ENCODE measurements at regions of chr5 and their contacts with region 1.

Region 1: DNA sequence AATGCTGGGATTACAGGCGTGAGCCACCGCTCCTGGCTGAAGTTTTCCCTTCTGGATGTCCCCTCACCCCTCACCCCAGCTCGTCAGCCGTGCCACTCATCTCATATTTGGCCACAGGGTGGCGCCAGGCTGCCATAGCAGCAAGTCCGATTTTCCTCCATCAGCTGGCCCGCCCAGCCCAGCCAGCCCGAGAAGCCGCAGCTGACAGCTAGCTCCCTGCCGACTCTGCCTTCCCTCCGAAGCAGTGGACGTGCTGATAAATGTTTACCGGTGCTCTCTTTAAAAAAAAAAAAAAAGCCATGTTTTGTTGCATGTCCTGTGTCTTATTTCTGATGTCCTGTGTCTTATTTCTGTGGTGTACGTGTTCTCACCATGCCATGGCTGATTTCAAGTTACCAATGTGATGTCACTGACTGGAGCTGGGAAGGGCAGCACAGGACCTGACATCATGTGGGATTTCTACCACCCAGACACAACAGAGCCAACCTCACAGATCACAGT is 58.3 kb downstream of the PFDN1 start:
- DNase-seq: peak; percentile 91 to 96 (median 94)
- ATAC-seq: peak; percentile 29 to 53 (median 48)
- H3K4me3 ChIP-seq: no peak overlapping the region
- H3K27ac ChIP-seq: peak overlapping the region in 10 of 12 donors; percentile 9 to 91 (median 74)
- H3K4me1 ChIP-seq: peaks cover 19 to 97% (median 76%) of the 10 kb centered on the region in 12 donors
- H3K27me3 ChIP-seq: no peaks in the 10 kb centered on the region
- CTCF ChIP-seq: peak; percentile 82 to 95 (median 89)
- POLR2A ChIP-seq: peak in 1 of 2 donors; percentile 21

Region 2: GRCh38 chr5:140182803-140183367 is 61.7 kb before region 1 on chr5:
- intact Hi-C with region 1: loop called in 5 of 10 experiments (anchors 5 to 10 kb)
- DNase-seq: peak in 4 of 5 donors; percentile 39 to 62 (median 42)
- ATAC-seq: peak; percentile 54 to 76 (median 68)
- H3K4me3 ChIP-seq: no peak overlapping the region
- H3K27ac ChIP-seq: peak overlapping the region in 11 of 12 donors; percentile 14 to 80 (median 67)
- H3K4me1 ChIP-seq: peaks cover 0 to 67% (median 51%) of the 10 kb centered on the region in 12 donors
- H3K27me3 ChIP-seq: no peaks in the 10 kb centered on the region
- CTCF ChIP-seq: no peak
- POLR2A ChIP-seq: no peak

Region 3: DNA sequence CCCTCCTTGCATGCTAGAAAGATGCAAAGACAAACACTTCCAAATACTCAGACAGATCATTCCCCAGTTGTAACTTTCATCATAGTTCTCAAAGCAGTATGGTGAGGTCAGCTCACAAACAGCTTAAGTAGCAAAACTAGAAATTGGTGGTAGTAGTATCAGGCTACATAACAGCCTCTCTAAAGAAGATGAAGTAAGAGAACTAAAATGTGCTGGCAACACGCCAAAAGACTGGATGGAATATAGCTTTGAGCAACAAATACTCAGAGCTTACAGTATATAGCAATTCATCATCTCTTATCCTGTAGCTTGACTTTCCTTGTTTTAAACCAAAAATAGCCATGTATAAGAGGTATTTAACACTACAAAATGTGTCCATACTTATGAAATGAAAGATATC is 50.8 kb after region 1 on chr5:
- intact Hi-C with region 1: loop called in 1 of 10 experiments (anchors 5 kb)
- DNase-seq: peak in 4 of 5 donors; percentile 55 to 80 (median 73)
- ATAC-seq: peak; percentile 80 to 91 (median 86)
- H3K4me3 ChIP-seq: no peak overlapping the region
- H3K27ac ChIP-seq: peak overlapping the region; percentile 35 to 84 (median 72)
- H3K4me1 ChIP-seq: peaks cover 11 to 88% (median 75%) of the 10 kb centered on the region in 12 donors
- H3K27me3 ChIP-seq: no peaks in the 10 kb centered on the region
- CTCF ChIP-seq: no peak
- POLR2A ChIP-seq: no peak

Region 4: GRCh38 chr5:140312067-140312790 is 67.7 kb after region 1 on chr5:
- intact Hi-C with region 1: no loop called
- DNase-seq: peak in 3 of 5 donors; percentile 50 to 64 (median 54)
- ATAC-seq: peak; percentile 43 to 91 (median 76)
- H3K4me3 ChIP-seq: peak overlapping the region in 3 of 12 donors; percentile 11 to 22 (median 14)
- H3K27ac ChIP-seq: peak overlapping the region; percentile 48 to 87 (median 72)
- H3K4me1 ChIP-seq: peaks cover 0 to 37% (median 23%) of the 10 kb centered on the region in 12 donors
- H3K27me3 ChIP-seq: no peaks in the 10 kb centered on the region
- CTCF ChIP-seq: no peak
- POLR2A ChIP-seq: peak in 1 of 2 donors; percentile 11

Region 5: DNA sequence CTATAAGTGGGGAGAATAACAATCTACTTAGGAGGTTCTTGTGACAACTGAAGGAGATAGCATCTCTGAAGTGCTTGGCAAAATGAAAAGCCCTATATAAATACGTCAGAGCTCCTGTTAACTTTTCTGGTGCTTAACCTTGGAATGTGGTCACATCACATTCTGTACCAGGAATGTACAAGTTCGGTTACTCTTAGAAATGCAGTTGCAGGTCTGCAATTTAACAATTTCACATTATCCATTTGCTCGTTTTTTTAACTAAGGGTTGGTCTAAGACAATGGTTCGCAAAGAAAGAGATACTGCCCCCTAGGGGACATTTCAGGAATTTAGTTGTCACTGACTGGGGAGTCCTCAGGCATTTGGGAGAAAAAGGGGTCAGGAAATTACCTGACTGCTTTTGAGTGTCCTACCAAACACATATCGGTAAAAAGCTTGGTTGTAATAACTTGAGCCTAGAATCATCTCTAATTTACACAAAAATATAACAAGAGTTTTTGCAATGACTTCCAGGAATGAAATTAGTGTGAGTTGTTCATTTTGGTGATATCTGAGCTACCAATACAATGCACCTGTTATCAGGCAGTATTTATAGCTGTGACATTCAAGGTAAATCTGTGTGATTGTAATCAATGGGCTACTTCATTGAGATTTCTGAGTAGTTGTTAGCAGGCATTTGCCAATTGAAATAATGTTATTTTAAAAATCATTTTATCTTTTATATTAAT is 107.2 kb after region 1 on chr5:
- intact Hi-C with region 1: loop called (anchors 1 to 2 kb)
- DNase-seq: peak in 2 of 5 donors; percentile 61 to 62
- ATAC-seq: peak; percentile 32 to 55 (median 36)
- H3K4me3 ChIP-seq: no peak overlapping the region
- H3K27ac ChIP-seq: no peak overlapping the region
- H3K4me1 ChIP-seq: peaks cover 0 to 23% (median 15%) of the 10 kb centered on the region in 12 donors
- H3K27me3 ChIP-seq: no peaks in the 10 kb centered on the region
- CTCF ChIP-seq: peak; percentile 75 to 97 (median 89)
- POLR2A ChIP-seq: no peak

Region 6: GRCh38 chr5:140710899-140711552 is 466.5 kb after region 1 on chr5:
- intact Hi-C with region 1: loop called in 1 of 10 experiments (anchors 10 kb)
- DNase-seq: peak; percentile 77 to 91 (median 85)
- ATAC-seq: peak; percentile 63 to 97 (median 96)
- H3K4me3 ChIP-seq: peak overlapping the region; percentile 28 to 72 (median 63)
- H3K27ac ChIP-seq: peak overlapping the region in 11 of 12 donors; percentile 67 to 95 (median 88)
- H3K4me1 ChIP-seq: peaks cover 0 to 12% (median 0%) of the 10 kb centered on the region in 12 donors
- H3K27me3 ChIP-seq: no peaks in the 10 kb centered on the region
- CTCF ChIP-seq: no peak
- POLR2A ChIP-seq: peak in 1 of 2 donors; percentile 44

Region 7: GRCh38 chr5:141441571-141442170 is 1197.1 kb after region 1 on chr5:
- intact Hi-C with region 1: no loop called
- DNase-seq: peak in 3 of 5 donors; percentile 41 to 71 (median 68)
- ATAC-seq: peak; percentile 53 to 93 (median 84)
- H3K4me3 ChIP-seq: no peak overlapping the region
- H3K27ac ChIP-seq: no peak overlapping the region
- H3K4me1 ChIP-seq: peaks cover 0 to 12% (median 0%) of the 10 kb centered on the region in 12 donors
- H3K27me3 ChIP-seq: no peaks in the 10 kb centered on the region
- CTCF ChIP-seq: no peak
- POLR2A ChIP-seq: no peak